ENCODE measurements at regions of chr11 and their contacts with region 1.

Region 1: DNA sequence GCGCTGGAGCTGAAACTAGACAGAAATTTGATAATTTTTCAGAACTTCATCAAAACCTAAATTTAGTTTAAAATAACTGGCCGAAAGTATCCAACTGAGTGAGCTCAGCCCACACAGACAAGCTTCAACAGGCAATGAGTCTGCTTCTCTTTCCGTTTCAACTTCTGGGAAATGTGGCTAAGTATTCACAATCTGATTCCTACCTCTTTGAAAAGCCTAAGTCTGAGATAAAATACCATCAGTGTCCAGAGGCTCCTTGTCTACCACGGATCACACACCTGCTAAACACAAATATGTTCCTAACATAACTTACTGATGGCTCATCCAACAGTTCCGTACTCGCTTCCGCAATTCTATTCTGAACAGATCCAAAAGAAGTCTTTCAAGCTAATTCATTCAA is 8.5 kb downstream of the SIK3 start:
- DNase-seq: no peak
- H3K4me3 ChIP-seq: no peak overlapping the region
- H3K4me3 Mint-ChIP-seq: peak overlapping the region in 1 of 7 donors; percentile 24
- H3K27ac ChIP-seq: no peak overlapping the region
- H3K27ac Mint-ChIP-seq: peak overlapping the region in 1 of 8 donors; percentile 9
- H3K4me1 ChIP-seq: peaks cover 45% of the 10 kb centered on the region
- H3K4me1 Mint-ChIP-seq: peaks cover 76 to 88% (median 88%) of the 10 kb centered on the region in 3 donors
- H3K27me3 ChIP-seq: no peaks in the 10 kb centered on the region
- H3K27me3 Mint-ChIP-seq: peaks cover 0 to 3% of the 10 kb centered on the region in 2 donors

Region 2: DNA sequence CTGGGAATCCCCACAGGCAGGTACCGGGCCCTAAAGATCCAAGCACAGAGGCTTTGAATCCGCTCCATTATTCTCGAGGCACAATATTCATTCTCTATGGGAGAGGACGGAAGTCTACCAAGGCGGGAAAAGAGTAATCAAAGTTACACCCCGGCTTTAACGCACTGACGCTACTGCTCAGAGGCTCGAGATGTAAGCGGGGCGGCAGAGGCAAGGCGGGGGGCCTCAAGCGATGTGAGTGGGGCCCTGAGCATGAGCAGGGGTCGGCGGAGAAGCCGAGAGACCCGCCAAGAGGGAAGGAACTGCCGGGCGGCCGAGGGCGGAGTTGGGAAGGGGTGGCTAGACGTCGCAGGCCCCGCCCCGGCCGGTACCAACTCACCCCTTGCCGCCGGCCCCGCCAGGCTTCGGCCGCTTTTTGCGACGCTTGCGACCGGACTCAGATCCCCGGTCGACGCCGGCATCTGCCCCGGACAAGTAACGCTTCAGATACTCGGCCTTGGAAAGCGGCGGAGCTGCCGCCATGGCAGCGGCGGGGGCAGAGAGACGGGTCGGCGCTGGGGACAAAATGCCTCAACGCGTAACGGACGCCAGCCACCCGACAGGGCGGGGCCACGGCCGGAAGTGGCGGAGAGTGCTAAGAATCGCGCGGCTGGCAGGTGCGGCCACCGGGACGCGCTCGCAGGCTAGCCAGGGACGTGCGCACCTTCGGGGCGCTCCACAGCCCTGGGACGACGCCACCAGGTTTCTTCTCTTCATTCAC is 317.1 kb before region 1 on chr11 and contains the start of gene BUD13:
- CTCF ChIA-PET with region 1: no interaction called
- POLR2A ChIA-PET with region 1: interaction called, 10 read pairs
- DNase-seq: peak; percentile 90 to 96 (median 94)
- H3K4me3 ChIP-seq: peak within 1 kb of the TSS; percentile 87
- H3K4me3 Mint-ChIP-seq: peak within 1 kb of the TSS; percentile 90 to 99 (median 94)
- H3K27ac ChIP-seq: peak within 1 kb of the TSS; percentile 88
- H3K27ac Mint-ChIP-seq: peak within 1 kb of the TSS; percentile 90 to 100 (median 98)
- H3K4me1 ChIP-seq: peaks cover 25% of the 10 kb centered on the region
- H3K4me1 Mint-ChIP-seq: peaks cover 31 to 46% (median 41%) of the 10 kb centered on the region in 3 donors
- H3K27me3 ChIP-seq: no peaks in the 10 kb centered on the region
- H3K27me3 Mint-ChIP-seq: no peaks in the 10 kb centered on the region
- total RNA-seq, gene BUD13: 31.4 to 32.3 TPM

Region 3: GRCh38 chr11:116797816-116798215 is 291.9 kb before region 1 on chr11:
- CTCF ChIA-PET with region 1: no interaction called
- POLR2A ChIA-PET with region 1: interaction called, 14 read pairs
- DNase-seq: no peak
- H3K4me3 ChIP-seq: no peak overlapping the region
- H3K4me3 Mint-ChIP-seq: no peak overlapping the region
- H3K27ac ChIP-seq: no peak overlapping the region
- H3K27ac Mint-ChIP-seq: peak overlapping the region in 1 of 8 donors; percentile 26
- H3K4me1 ChIP-seq: no peaks in the 10 kb centered on the region
- H3K4me1 Mint-ChIP-seq: peaks cover 0 to 1% (median 0%) of the 10 kb centered on the region in 3 donors
- H3K27me3 ChIP-seq: no peaks in the 10 kb centered on the region
- H3K27me3 Mint-ChIP-seq: peaks cover 4 to 31% of the 10 kb centered on the region in 2 donors

Measured in CD8-positive, alpha-beta memory T cell (primary cell).